GM10248 (cell line): ENCODE measurements at regions of chr7 and their contacts with region 1.

Region 1: DNA sequence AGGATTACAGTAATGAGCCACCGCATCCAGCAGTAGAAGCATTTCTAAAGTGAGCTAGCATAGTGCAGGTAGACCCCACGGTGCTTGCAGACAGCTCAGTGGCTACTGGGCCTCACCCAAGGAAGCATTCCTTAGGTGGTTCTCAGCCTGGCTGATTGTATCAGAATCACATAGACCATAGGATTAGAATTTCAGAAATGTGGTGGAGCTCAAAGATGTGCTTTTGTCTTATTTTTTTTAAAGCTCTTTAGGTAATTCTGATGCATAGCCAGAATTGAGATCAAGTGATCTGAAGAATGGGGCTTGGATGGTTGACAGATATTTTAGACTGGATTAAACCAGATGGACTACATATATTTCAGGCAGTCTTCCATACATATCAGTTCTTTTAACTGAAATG is 11.0 kb downstream of the ANLN start:
- DNase-seq: no peak
- CTCF ChIP-seq: no peak

Region 2: GRCh38 chr7:36389371-36390198 is 11.0 kb before region 1 on chr7 and contains the start of gene ANLN:
- CTCF ChIA-PET with region 1: interaction called, 14 read pairs
- POLR2A ChIA-PET with region 1: no interaction called
- DNase-seq: peak; percentile 98
- CTCF ChIP-seq: no peak